Activated CD4-positive, alpha-beta T cell treated with anti-CD3 and anti-CD28 coated beads, Interleukin-2, amount 10 ng/mL, durations not matched to agents 24 days and 14 days (primary cell): ENCODE measurements at regions of chr1 and their contacts with region 1.

Region 1: DNA sequence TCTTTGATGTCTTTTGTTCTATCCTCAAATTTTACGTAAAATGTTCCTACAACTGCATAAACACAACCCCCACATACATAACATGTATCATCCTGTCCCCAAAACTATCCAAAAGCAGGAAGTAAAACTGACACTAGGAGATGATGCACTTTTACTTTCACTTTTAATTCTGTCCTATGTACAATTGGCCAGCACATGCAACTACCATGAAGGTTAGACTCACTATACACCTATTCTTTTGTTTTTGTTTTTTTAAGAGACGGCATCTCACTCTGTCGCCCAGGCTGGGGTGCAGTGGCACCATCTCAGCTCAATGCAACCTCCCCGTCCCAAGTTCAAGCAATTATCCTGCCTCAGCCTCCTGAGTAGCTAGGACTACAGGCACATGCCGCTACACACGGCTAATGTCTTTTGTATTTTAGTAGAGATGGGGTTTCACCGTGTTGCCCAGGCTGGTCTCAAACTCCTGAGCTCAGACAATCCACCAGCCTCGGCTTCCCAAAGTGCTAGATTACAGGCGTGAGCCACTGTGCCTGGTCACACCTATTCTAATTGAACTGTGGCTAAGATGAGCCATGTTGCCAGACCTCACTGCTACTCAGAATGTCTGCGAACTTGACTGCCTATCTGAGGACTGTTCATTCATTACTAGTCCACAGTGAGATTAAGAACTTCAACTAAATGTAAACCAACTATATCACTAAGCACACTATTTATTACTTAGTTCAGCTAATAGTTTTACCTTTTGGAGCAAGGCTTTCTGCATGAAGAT is 48.0 kb downstream of the TOR3A start:
- DNase-seq: peak; percentile 78
- H3K4me3 Mint-ChIP-seq: peak overlapping the region; percentile 85
- H3K27ac Mint-ChIP-seq: peak overlapping the region; percentile 97
- H3K4me1 Mint-ChIP-seq: peaks cover 26% of the 10 kb centered on the region
- H3K27me3 Mint-ChIP-seq: no peaks in the 10 kb centered on the region

Region 2: DNA sequence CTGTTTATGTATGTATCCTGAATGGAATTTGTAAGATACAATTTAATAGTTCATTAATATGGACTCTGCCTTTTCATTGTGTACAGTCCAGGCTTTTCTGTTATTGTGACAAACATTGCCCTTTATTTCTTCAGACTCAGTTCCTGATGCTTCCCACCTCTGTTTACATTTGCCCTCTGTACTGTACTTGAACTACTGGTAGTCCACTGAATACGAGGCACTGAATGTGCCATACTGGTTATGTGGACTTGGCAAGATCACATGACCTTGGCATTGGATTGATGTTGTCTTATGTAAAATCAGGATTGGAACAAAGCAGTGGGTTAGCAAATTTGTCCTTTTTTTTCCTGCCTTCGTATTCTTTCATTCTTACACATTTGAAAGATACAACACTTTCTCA is 377.0 kb before region 1 on chr1:
- intact Hi-C with region 1: no loop called
- DNase-seq: no peak
- H3K4me3 Mint-ChIP-seq: no peak overlapping the region
- H3K27ac Mint-ChIP-seq: no peak overlapping the region
- H3K4me1 Mint-ChIP-seq: peaks cover 3% of the 10 kb centered on the region
- H3K27me3 Mint-ChIP-seq: peaks cover 2% of the 10 kb centered on the region

Region 3: DNA sequence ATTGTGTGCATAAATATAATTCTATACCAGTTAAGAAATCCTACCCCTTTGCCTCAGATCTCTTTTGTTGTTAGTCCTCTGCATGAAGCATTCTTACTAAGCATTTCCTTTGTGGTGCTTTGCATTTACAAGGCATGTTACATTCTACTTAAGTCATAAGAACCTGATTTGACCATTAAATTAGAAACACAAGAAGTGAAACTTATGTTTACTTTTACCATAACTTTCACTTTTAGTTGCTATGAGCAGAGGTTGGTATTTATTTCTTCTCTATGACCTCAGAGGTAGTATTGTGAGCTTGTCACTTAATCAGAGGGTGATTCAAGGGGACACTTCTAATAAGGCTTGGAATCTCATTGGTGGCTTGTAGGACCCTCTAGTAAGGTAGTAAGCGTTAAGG is 95.2 kb before region 1 on chr1:
- intact Hi-C with region 1: loop called (anchors 1 kb)
- DNase-seq: no peak
- H3K4me3 Mint-ChIP-seq: peak overlapping the region; percentile 62
- H3K27ac Mint-ChIP-seq: peak overlapping the region; percentile 91
- H3K4me1 Mint-ChIP-seq: peaks cover 70% of the 10 kb centered on the region
- H3K27me3 Mint-ChIP-seq: no peaks in the 10 kb centered on the region

Region 4: DNA sequence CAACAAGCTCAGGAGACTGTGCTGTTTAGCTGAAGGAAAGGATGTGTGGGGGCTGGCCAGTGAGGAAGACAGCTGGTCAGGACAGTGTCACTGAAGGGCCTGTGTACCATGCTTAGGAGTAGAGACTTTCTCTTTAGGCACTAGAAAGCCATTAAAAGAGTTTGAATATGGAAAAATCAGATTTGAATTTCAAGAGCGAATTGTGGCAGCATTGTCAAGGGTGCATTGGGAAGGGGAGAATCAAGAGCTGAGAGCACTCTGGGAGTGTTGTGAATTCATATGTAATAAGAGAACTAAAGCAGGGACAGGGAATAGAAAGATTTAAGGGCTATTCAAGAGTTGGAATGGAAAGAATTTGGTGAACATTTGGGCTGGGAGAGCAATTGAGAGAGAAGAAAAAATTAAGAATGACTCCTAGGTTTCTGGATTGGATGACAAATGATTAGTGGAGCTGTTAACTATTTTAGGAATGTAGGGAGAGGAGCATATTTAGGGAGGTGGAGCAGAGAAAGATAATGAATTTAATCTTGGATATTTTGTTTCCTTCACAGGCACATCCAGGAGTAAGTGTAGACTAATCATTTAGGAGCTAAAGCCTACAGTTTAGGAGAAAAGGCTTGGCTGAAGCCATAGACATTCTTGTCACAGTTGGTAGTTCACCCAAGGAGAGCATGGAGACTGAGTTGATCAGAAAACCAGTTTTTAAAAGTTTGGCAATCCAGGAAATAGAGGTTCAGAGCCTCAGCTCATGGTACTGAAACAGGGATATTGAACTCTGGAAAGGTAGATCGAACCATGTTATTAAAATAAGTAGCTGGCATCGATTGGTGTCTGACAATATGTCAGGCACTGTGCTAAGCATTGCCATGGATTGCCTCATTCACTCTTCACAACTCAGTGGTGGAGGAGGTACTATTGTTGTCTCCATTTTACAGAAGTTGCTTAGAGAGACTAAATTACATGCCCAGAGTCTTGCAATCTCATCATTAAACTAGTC is 71.1 kb before region 1 on chr1:
- intact Hi-C with region 1: no loop called
- DNase-seq: no peak
- H3K4me3 Mint-ChIP-seq: no peak overlapping the region
- H3K27ac Mint-ChIP-seq: no peak overlapping the region
- H3K4me1 Mint-ChIP-seq: no peaks in the 10 kb centered on the region
- H3K27me3 Mint-ChIP-seq: no peaks in the 10 kb centered on the region

Region 5: GRCh38 chr1:179142889-179143299 is 13.0 kb after region 1 on chr1:
- intact Hi-C with region 1: loop called (anchors 1 kb)
- DNase-seq: no peak
- H3K4me3 Mint-ChIP-seq: peak overlapping the region; percentile 63
- H3K27ac Mint-ChIP-seq: peak overlapping the region; percentile 81
- H3K4me1 Mint-ChIP-seq: peaks cover 30% of the 10 kb centered on the region
- H3K27me3 Mint-ChIP-seq: no peaks in the 10 kb centered on the region

Region 6: GRCh38 chr1:179229214-179230140 is 99.6 kb after region 1 on chr1 and contains the start of gene ABL2:
- intact Hi-C with region 1: loop called (anchors 2 kb)
- DNase-seq: peak; percentile 88
- H3K4me3 Mint-ChIP-seq: peak within 1 kb of the TSS; percentile 90
- H3K27ac Mint-ChIP-seq: peak within 1 kb of the TSS; percentile 89
- H3K4me1 Mint-ChIP-seq: peaks cover 24% of the 10 kb centered on the region
- H3K27me3 Mint-ChIP-seq: peaks cover 4% of the 10 kb centered on the region
- total RNA-seq, gene ABL2: 9.9 and 11.1 TPM in 2 replicates

Region 7: GRCh38 chr1:179298952-179299351 is 169.1 kb after region 1 on chr1:
- intact Hi-C with region 1: loop called (anchors 2 kb)
- DNase-seq: peak; percentile 88
- H3K4me3 Mint-ChIP-seq: peak overlapping the region; percentile 50
- H3K27ac Mint-ChIP-seq: peak overlapping the region; percentile 66
- H3K4me1 Mint-ChIP-seq: peaks cover 50% of the 10 kb centered on the region
- H3K27me3 Mint-ChIP-seq: no peaks in the 10 kb centered on the region